ENCODE measurements at regions of chr20 and their contacts with region 1.

Region 1: DNA sequence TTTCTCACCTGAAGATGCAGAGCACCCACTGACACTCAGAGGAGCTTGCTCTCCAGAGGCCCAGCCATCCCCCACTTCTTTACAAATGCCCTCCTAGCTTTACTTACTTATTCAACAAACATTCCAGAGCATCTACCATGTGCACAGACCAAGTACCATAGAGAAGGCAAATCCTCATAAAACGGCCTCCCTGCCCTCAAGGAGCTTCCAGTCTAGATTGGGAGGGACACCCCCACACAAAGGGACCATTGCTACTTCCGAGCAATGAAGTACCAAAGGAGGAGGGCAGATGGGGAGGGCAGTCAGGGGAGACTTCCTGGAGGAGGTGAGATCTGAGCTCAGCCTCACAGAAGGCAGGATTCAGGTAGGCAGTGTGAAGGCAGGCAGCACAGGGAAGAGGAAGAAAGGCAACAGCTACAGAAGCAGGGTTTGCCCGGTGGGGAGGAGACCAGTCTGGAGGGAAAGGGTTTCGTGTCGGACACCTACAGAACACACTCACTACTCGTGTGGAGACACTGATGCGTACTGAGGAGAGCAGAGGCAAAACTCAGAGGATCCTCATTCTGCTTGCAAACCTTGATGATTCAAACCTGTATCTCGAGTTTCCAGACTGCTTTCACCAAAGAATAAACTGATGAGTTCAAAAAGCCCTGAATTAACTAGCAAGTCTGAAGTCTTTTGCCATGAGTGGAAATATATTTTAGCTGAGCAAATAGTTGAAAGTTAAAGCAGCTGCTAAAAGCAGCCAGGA is 107.9 kb downstream of the ZMYND8 start:
- DNase-seq: no peak
- ATAC-seq: no peak
- H3K4me3 ChIP-seq: no peak overlapping the region
- H3K27ac ChIP-seq: no peak overlapping the region
- H3K4me1 ChIP-seq: no peaks in the 10 kb centered on the region
- H3K27me3 ChIP-seq: no peaks in the 10 kb centered on the region
- CTCF ChIP-seq: no peak

Region 2: GRCh38 chr20:47216819-47217410 is 31.7 kb before region 1 on chr20:
- CTCF ChIA-PET with region 1: interaction called, 10 read pairs
- POLR2A ChIA-PET with region 1: no interaction called
- in situ Hi-C with region 1: no loop called
- intact Hi-C with region 1: no loop called
- DNase-seq: no peak
- ATAC-seq: no peak
- H3K4me3 ChIP-seq: no peak overlapping the region
- H3K27ac ChIP-seq: no peak overlapping the region
- H3K4me1 ChIP-seq: no peaks in the 10 kb centered on the region
- H3K27me3 ChIP-seq: no peaks in the 10 kb centered on the region
- CTCF ChIP-seq: no peak

Measured in Panc1 (cell line).